GM18951 (cell line): ENCODE measurements at regions of chr3 and their contacts with region 1.

Region 1: DNA sequence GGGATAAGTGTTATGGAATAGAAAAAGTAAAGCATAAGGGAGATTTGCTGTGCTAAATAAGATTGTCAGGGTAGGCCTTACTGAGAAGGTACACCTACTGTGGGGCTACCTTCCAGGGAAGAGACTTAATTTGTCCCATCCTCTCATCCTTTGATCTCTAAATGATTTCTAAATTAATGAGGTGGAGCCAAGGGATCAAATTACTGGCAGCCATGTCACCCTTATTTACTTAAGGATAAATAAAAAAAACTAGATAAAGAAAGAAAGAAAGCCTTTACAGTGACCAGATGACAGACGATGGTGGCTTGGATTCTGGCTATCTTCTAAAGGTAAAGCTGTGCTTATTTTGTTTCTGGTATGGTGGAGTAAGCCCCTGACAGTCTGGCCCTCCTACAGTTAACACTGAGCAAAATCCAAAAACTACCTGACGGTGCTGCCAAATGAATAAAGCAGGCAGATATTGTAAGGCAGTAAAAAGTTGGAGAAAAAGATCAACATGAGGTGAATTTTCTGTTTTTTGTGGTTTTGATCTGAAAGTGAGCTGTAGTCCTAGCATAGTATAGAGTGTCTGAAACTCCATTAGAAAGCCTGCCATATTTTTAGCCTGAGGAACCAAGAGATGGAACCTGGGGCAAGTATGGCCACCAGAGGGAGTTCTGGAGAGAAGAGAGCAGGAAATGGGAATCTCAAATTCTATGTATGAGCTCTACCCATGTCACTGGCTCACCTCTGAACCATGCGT is 285.1 kb upstream of the MANF start:
- POLR2A ChIP-seq: no peak

Region 2: DNA sequence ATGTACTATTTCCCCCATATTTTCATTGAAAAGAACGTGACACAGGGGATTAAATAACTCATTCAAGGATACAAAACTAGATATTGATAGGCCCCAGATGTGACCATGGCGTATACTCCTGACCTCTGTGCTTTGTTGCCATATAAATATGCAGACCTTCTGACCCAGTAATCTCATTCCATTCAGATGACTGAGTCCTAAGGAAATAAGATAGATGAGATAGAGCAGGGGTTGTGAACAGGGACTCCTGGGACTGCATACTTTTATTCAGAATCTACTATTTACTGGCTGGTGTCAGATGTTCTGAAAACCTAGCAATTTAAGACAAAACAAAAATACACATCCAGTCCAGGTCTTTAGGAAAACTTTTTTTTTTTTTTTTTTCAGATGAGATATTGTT is 145.9 kb after region 1 on chr3:
- in situ Hi-C with region 1: no loop called
- POLR2A ChIP-seq: no peak

Region 3: DNA sequence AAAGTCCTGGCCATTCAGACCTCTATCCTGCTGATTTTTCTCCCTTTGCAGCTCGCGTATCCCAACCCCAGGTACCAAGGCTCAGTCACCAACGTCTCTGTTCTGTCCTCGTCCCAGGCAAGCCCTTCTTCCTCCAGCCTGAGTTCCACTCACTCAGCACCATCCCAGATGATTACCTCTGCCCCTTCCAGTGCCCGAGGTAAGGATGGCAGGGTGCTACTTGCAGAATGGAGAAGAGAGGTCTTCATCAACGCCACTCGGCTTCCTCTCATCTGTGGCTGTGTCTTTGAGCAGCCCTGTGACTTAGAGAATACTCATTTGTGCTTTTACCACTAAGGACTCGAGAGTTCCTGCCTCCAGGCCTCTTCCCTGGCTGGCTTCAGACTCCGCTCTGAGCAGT is 262.5 kb after region 1 on chr3:
- in situ Hi-C with region 1: loop called (anchors 10 kb)
- POLR2A ChIP-seq: no peak